Activated CD8-positive, alpha-beta T cell treated with anti-CD3 and anti-CD28 coated beads, Interleukin-2, amount 10 ng/mL, durations not matched to agents 7 days and 5 days (primary cell): ENCODE measurements at regions of chr12 and their contacts with region 1.

Region 1: GRCh38 chr12:39692258-39692853 is 72.8 kb upstream of the ABCD2 start:
- DNase-seq: no peak
- ATAC-seq: no peak
- H3K4me3 Mint-ChIP-seq: no peak overlapping the region
- H3K27ac Mint-ChIP-seq: no peak overlapping the region
- H3K4me1 Mint-ChIP-seq: peaks cover 9% of the 10 kb centered on the region
- H3K27me3 Mint-ChIP-seq: no peaks in the 10 kb centered on the region

Region 2: DNA sequence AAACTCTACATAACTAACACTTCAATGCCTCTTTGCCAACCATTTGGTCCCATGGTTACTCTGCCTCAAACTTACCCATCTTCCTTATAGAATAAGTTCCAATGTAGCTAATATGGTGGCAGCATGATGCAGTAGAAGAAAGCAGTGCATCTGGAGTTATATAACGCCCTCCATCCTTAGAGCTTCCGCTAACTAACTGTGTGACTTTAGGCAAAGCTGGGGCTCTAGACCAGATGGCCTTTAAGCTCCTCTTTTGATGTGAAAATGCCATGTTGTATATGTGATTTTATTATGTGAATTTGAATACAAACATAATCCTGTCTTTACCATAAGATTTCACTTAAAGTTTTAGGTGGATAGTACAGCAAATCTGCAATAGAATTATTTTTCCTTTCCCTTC is 78.8 kb before region 1 on chr12:
- CTCF ChIA-PET with region 1: interaction called, 10 read pairs
- POLR2A ChIA-PET with region 1: no interaction called
- DNase-seq: no peak
- ATAC-seq: no peak
- H3K4me3 Mint-ChIP-seq: peak overlapping the region; percentile 81
- H3K27ac Mint-ChIP-seq: no peak overlapping the region
- H3K4me1 Mint-ChIP-seq: peaks cover 41% of the 10 kb centered on the region
- H3K27me3 Mint-ChIP-seq: no peaks in the 10 kb centered on the region